PC-9 (cell line): ENCODE measurements at regions of chr20 and their contacts with region 1.

Region 1: DNA sequence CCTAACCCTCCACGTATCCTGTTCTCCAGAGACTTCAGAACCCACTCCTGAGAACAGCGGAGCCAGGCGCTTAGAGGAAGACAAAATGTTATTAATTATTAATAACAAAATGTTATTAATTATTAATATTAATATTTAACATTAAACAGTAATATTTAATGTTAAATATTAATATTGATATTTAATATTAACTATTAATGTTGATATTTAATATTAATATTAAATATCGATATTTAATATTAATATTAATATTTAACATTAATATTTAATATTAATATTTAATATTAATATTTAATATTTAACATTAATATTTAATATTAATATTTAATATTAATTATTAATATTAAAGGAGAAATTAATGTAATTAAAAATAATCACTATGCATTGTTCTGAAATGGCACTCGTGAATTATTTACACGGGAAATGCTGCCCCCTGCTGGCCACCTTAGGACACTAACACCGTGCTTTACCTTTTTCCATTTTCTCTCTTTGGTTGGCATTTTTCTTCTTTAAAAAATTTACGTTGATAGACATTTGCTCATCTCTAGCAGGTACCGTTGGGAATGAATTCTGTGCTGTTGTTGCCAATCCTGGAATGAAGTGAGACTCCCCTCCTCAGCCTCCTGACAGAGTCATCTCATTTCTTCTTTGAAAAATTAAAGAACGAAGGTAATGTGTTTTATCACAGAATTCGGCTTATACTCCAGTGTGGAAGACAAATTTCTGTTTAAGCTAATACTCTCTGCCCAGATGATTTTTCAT is 7.5 kb upstream of the GGTLC1 start:
- DNase-seq: peak in 1 of 2 experiments; percentile 45
- H3K4me3 ChIP-seq: no peak overlapping the region
- H3K27ac ChIP-seq: no peak overlapping the region
- H3K4me1 ChIP-seq: 0 out of 2 replicates have a peak, but pooled peaks cover 7% of the 10 kb centered on the region
- H3K27me3 ChIP-seq: no peaks in the 10 kb centered on the region
- CTCF ChIP-seq: peak; percentile 84

Region 2: DNA sequence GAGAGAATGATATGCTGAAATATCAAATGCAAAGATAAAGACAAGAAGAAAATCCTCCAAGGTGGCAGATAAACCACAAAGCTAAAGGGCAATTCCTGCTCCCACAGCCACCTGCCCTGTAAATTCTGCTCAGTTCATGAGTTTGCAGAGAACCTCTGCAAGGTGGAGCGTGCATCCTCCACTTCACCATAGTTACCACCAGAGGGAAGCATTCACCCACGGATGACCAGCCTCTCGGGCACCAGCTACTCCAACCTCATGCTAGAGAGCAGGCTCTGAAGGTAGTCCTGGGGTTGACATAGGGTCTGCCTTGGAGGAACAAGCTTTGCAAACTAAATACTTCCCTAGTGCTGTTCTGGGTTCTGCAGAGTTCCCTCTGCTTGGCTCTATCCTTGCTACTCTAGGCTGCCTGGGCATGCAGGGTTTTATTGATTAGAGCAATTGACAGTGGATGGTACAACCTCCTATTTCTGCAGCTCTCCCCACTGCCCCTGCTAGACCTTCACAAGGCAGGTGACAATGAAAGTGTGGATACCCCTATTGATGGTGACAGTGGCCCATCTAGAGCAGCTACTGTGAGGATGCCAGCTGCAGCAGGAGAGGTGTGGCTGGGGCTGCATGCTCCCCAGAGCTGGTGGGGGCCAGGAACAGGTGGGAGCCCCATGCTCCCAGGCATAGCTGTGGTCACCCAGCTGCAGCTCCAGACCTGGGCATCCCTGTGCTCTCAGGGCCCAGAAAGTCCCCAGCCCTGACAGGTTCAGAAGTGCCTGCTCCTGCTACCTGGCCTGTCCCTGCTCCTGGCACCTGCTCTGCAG is 58.6 kb before region 1 on chr20:
- CTCF ChIA-PET with region 1: interaction called, 3 read pairs
- POLR2A ChIA-PET with region 1: no interaction called
- intact Hi-C with region 1: loop called (anchors 1 kb)
- DNase-seq: peak; percentile 60 to 75
- H3K4me3 ChIP-seq: no peak overlapping the region
- H3K27ac ChIP-seq: no peak overlapping the region
- H3K4me1 ChIP-seq: no peaks in the 10 kb centered on the region
- H3K27me3 ChIP-seq: no peaks in the 10 kb centered on the region
- CTCF ChIP-seq: peak; percentile 92

Region 3: DNA sequence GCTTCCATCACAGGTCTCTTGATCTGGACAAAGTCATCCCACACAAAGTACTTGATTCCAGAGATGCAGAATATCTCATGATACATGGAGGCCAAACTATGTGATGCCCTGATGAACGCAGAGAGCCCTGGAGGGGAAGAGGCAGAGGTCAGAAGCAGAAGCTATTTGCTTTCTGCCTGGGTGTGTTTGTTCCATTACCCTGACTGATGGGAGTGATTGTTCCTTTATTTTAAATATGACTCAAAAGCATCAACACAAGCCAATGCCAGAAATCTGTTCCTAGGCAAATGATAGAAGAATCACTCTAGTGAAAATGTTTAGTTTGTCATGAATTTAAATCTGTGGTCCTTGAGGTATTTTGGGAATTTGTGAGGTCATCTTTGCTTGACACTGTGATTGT is 47.2 kb after region 1 on chr20:
- CTCF ChIA-PET with region 1: no interaction called
- POLR2A ChIA-PET with region 1: no interaction called
- intact Hi-C with region 1: no loop called
- DNase-seq: no peak
- H3K4me3 ChIP-seq: no peak overlapping the region
- H3K27ac ChIP-seq: no peak overlapping the region
- H3K4me1 ChIP-seq: peaks cover 23% of the 10 kb centered on the region
- H3K27me3 ChIP-seq: no peaks in the 10 kb centered on the region
- CTCF ChIP-seq: no peak

Region 4: DNA sequence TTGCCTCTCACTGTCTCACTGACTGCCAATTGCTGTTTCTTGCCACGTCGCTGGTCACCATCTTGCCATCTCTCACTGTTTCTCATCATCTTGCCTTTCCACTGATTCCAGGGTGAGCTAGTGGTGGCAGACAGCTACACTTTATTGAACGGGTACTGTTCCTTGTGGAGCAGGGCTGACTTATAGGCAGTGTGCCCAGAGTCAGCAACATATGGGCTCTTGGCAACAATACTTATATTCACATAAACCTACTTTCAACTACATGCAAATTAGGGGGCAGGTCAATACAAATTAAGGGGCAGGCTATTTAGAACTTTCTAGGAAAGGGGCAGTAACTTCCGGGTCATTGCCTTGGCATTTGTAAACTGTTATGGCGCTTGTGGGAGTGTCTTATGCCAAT is 287.1 kb after region 1 on chr20:
- CTCF ChIA-PET with region 1: no interaction called
- POLR2A ChIA-PET with region 1: no interaction called
- intact Hi-C with region 1: no loop called
- DNase-seq: no peak
- H3K4me3 ChIP-seq: no peak overlapping the region
- H3K27ac ChIP-seq: no peak overlapping the region
- H3K4me1 ChIP-seq: no peaks in the 10 kb centered on the region
- H3K27me3 ChIP-seq: no peaks in the 10 kb centered on the region
- CTCF ChIP-seq: no peak

Region 5: DNA sequence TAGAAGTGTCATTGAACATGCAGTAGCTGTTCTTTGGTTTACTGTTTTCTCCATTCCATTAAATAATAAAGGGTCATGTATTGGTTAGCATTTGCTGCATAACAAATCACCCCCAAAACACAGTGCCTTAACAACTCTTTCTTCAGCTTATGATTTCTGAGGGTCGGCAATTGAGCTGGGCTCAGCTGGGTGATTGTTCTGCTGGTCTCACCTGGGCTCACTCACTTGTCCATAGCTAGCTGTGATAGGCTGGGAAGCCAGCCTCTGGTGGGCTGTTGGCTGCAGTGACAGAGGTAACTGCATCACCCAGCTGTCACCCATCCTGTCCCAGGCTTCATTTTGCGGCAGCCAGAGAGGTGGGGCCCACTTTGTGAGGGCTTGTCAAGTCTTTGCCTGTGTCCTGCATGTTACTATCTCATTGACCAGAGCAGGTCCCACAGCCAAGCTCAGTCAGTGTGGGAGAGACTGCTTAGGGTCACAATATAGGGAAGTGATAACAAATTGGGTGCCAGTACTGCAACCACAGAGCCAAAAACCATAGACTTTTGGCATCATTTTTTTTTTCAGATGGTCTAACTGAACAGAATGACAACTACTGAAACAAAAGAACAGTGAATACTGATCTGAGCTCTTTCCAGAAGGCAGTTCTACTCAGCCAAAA is 550.3 kb after region 1 on chr20:
- CTCF ChIA-PET with region 1: no interaction called
- POLR2A ChIA-PET with region 1: interaction called, 11 read pairs
- intact Hi-C with region 1: no loop called
- DNase-seq: no peak
- H3K4me3 ChIP-seq: no peak overlapping the region
- H3K27ac ChIP-seq: no peak overlapping the region
- H3K4me1 ChIP-seq: no peaks in the 10 kb centered on the region
- H3K27me3 ChIP-seq: no peaks in the 10 kb centered on the region
- CTCF ChIP-seq: no peak